Spleen (tissue), 13 donors: ENCODE measurements at regions of chr9 and their contacts with region 1.

Region 1: DNA sequence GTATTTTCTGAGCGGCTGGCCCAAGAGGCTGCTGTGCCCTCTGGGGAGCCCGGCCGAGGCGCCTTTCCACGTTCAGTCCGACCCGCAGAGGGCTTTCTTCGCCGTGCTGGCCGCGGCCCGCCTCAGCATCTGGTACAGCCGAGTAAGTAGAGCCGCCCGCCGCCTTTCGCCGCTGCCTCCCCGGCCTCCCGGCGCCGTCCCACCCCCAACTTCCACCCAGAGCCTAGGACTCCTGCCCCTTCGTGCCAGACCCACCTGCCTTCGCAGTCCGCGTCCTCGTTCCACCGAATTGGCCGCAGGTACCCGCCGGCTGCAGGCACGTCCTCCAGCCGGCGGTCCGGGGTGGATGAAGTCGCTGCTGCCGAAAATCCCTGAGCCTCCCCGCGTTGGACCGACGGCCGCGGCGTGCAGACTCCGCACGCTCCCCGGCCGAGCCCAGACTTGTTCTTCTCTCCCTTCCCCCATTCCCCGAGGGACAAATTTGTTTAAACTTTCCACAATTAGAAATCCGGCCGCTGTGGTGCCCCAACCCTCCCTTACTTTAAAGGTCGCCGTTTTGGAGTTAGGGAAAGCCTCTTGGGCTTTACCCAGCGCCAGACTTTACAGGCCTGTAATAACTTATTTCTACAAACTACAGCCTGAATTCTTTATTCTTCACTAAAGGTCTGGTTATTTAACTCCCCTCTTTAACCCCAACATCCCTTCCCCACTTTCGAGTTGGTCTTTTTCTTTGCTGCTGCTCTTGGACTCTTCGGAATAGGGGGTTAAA is 589 bp downstream of the RIC1 start:
- DNase-seq: no peak
- H3K4me3 ChIP-seq: peak overlapping the region; percentile 76 to 97 (median 84)
- H3K27ac ChIP-seq: peak overlapping the region; percentile 95 to 99 (median 96)
- H3K4me1 ChIP-seq: peaks cover 34 to 84% (median 68%) of the 10 kb centered on the region in 6 donors
- H3K27me3 ChIP-seq: no peaks in the 10 kb centered on the region
- CTCF ChIP-seq: no peak
- POLR2A ChIP-seq: no peak

Region 2: DNA sequence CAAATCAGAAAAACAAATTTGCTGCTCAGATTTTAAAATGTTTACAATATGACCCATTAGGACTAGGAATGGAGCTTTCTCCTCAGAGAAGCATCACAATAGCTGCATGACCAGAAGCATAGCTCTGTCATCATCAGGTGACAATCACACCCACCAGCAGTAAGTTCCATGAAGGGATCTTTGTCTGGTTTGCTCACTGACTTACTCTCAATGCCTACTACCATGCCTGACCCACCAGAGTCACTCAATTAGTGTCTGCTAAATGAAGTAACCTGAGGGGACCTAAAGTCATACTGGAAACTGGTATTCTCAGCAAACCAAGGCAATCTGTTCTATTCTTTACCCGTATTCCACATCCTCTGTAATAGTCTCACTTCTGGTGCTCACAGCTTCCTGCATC is 195.7 kb after region 1 on chr9:
- intact Hi-C with region 1: loop called (anchors 10 kb)
- DNase-seq: no peak
- H3K4me3 ChIP-seq: no peak overlapping the region
- H3K27ac ChIP-seq: no peak overlapping the region
- H3K4me1 ChIP-seq: peaks cover 0 to 21% (median 0%) of the 10 kb centered on the region in 6 donors
- H3K27me3 ChIP-seq: no peaks in the 10 kb centered on the region
- CTCF ChIP-seq: no peak
- POLR2A ChIP-seq: no peak